ENCODE measurements at regions of chr22 and their contacts with region 1.

Region 1: GRCh38 chr22:20885557-20886323 is 26.9 kb downstream of the SNAP29 start:
- DNase-seq: peak; percentile 78
- ATAC-seq: peak; percentile 96
- H3K4me3 ChIP-seq: no peak overlapping the region
- H3K27ac ChIP-seq: peak overlapping the region; percentile 31; the same call in 1 of the 2 replicates
- H3K4me1 ChIP-seq: peaks cover 13% of the 10 kb centered on the region
- H3K27me3 ChIP-seq: no peaks in the 10 kb centered on the region
- CTCF ChIP-seq: peak; percentile 91

Region 2: DNA sequence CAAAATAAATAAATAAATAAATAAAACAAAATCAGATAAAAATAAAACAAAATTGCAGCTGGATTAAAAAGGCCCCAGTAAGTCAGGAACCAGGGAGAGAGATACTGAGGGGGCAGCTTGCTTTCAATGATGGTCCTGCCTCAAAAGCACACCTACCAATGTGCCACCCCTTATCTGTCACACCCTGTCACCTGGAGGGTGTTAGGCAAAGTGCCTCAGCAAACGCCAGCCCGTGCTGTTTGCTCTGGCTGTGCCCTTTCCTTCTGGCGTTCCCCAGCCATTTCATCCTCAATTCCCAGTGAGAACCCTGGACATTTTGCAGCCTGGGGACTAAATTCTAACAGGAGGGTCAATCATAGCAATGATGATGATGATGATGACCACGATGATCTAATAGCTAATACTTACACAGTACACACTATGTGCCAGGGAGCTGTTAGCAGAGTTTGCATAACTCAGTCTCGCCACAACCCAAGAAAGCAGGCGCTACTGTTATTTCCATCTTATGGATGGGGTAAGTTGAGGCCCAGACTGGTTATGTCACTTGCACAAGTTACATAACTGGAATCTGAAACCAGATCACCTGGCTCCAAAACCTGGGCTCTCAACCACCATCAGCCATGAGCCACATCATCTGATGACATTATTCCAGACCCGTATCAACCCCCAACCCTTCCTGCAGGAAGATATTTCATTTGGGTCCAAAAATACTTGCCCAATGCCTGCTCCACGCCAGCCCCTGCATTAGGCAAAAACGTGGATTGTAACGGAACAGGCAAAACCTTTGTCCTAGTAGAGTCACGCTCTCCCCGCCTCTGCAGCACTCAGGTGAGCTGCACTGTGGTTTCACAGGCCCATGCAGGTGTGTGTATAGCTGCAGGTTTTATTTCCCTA is 244.5 kb before region 1 on chr22:
- CTCF ChIA-PET with region 1: no interaction called
- POLR2A ChIA-PET with region 1: no interaction called
- intact Hi-C with region 1: no loop called
- DNase-seq: no peak
- ATAC-seq: no peak
- H3K4me3 ChIP-seq: no peak overlapping the region
- H3K27ac ChIP-seq: no peak overlapping the region
- H3K4me1 ChIP-seq: no peaks in the 10 kb centered on the region
- H3K27me3 ChIP-seq: no peaks in the 10 kb centered on the region
- CTCF ChIP-seq: no peak

Region 3: GRCh38 chr22:20677684-20678242 is 208.0 kb before region 1 on chr22:
- CTCF ChIA-PET with region 1: no interaction called
- POLR2A ChIA-PET with region 1: no interaction called
- intact Hi-C with region 1: no loop called
- DNase-seq: no peak
- ATAC-seq: no peak
- H3K4me3 ChIP-seq: no peak overlapping the region
- H3K27ac ChIP-seq: no peak overlapping the region
- H3K4me1 ChIP-seq: no peaks in the 10 kb centered on the region
- H3K27me3 ChIP-seq: no peaks in the 10 kb centered on the region
- CTCF ChIP-seq: no peak

Region 4: GRCh38 chr22:20803696-20804324 is 81.9 kb before region 1 on chr22:
- CTCF ChIA-PET with region 1: no interaction called
- POLR2A ChIA-PET with region 1: no interaction called
- intact Hi-C with region 1: loop called (anchors 1 kb)
- DNase-seq: peak; percentile 35
- ATAC-seq: peak; percentile 50; the same call in 1 of the 2 replicates
- H3K4me3 ChIP-seq: no peak overlapping the region
- H3K27ac ChIP-seq: no peak overlapping the region
- H3K4me1 ChIP-seq: peaks cover 21% of the 10 kb centered on the region
- H3K27me3 ChIP-seq: no peaks in the 10 kb centered on the region
- CTCF ChIP-seq: peak; percentile 69

Region 5: GRCh38 chr22:20852076-20852475 is 33.7 kb before region 1 on chr22:
- CTCF ChIA-PET with region 1: no interaction called
- POLR2A ChIA-PET with region 1: no interaction called
- intact Hi-C with region 1: no loop called
- DNase-seq: no peak
- ATAC-seq: no peak
- H3K4me3 ChIP-seq: no peak overlapping the region
- H3K27ac ChIP-seq: no peak overlapping the region
- H3K4me1 ChIP-seq: peaks cover 6% of the 10 kb centered on the region
- H3K27me3 ChIP-seq: no peaks in the 10 kb centered on the region
- CTCF ChIP-seq: no peak

Region 6: GRCh38 chr22:20916983-20917810 is 31.5 kb after region 1 on chr22 and contains the start of gene CRKL:
- CTCF ChIA-PET with region 1: interaction called, 11 read pairs
- POLR2A ChIA-PET with region 1: no interaction called
- intact Hi-C with region 1: loop called (anchors 2 kb)
- DNase-seq: peak; percentile 95
- ATAC-seq: peak; percentile 96
- H3K4me3 ChIP-seq: peak within 1 kb of the TSS; percentile 99
- H3K27ac ChIP-seq: peak within 1 kb of the TSS; percentile 70
- H3K4me1 ChIP-seq: peaks cover 9% of the 10 kb centered on the region
- H3K27me3 ChIP-seq: no peaks in the 10 kb centered on the region
- CTCF ChIP-seq: peak; percentile 77
- total RNA-seq, gene CRKL: 35.4 and 36.2 TPM in 2 replicates

Region 7: DNA sequence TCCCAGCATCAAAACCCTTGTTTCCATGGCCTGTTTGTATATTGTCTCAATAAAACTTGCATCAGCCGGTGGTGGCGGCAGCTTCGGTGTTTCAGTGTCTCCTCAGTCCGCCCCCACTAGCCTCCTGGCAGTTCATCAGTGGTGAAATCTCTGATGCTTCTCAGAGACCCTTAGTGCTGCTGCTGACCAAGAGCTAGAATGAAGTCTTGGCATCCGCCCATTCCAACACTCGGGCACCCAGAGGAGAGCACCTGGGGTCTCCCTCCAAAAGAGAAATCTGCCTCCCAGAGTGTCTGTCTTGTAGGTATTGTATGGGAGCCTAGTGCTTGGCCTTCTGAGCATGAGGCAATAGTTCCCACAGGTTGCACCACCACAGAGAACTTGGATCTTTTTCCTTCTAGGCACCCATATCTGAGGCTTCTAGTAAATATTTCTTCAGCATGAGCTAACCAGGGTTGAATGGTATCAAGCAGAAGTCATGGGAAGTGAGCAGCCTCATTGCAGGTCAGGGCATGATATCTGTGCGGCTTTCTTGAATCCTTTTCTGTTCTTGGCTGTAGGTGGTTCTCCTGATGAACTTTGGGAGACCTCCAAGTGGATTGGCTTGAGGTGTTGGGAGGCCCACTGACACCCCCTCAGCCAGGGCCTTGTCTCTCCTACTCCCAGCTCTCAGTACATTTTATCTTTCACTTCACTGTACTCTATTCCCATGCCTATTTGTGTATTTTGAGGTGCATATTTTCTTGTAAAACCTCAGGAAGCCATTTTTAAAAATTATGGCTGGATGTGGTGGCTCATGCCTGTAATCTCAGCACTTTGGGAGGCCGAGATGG is 68.1 kb after region 1 on chr22:
- CTCF ChIA-PET with region 1: interaction called, 3 read pairs
- POLR2A ChIA-PET with region 1: no interaction called
- intact Hi-C with region 1: loop called (anchors 5 kb)
- DNase-seq: no peak
- ATAC-seq: no peak
- H3K4me3 ChIP-seq: no peak overlapping the region
- H3K27ac ChIP-seq: no peak overlapping the region
- H3K4me1 ChIP-seq: peaks cover 19% of the 10 kb centered on the region
- H3K27me3 ChIP-seq: no peaks in the 10 kb centered on the region
- CTCF ChIP-seq: no peak

Region 8: DNA sequence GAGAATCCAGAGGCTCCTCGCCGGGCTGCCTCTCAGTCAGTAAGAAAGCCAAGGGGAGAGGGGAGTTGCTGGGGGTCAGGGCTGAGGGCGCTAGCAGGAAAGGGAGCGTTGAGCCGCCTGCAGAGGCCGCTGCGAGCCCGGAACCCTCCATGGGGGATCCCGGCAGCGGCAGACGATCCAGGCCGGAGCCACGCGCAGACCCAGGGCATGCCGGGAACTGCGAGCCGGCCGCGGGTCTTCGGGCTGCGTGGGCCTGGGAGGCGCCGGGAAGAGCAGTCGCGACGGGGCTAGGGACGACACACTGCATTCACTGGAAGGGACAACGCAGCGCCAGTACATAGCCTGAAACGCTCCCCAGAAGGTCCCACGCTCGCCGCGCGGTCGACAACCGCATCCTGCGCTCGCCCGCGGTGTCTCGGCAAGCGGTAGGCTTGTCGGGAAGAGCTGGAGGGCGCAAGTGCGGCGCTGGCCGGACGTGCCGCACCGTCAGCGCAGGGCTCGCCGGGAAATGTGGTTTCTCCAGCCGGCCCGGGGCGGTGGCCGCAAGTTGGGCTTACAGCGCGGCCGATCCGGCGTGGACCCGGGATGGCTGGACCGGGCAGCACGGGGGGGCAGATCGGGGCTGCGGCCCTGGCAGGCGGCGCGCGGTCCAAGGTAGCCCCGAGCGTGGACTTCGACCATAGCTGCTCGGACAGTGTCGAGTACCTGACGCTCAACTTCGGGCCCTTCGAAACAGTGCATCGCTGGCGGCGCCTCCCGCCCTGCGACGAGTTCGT is 96.2 kb after region 1 on chr22 and contains the start of gene LZTR1:
- CTCF ChIA-PET with region 1: interaction called, 4 read pairs
- POLR2A ChIA-PET with region 1: no interaction called
- intact Hi-C with region 1: loop called (anchors 1 kb)
- DNase-seq: peak; percentile 67
- ATAC-seq: peak; percentile 96
- H3K4me3 ChIP-seq: peak within 1 kb of the TSS; percentile 80
- H3K27ac ChIP-seq: peak within 1 kb of the TSS; percentile 47
- H3K4me1 ChIP-seq: peaks cover 13% of the 10 kb centered on the region
- H3K27me3 ChIP-seq: no peaks in the 10 kb centered on the region
- CTCF ChIP-seq: peak; percentile 56
- total RNA-seq, gene LZTR1: 41.0 and 49.3 TPM in 2 replicates